CD14-positive monocyte (primary cell): ENCODE measurements at regions of chr6 and their contacts with region 1.

Region 1: GRCh38 chr6:157021344-157021992 is 244.3 kb downstream of the ARID1B start:
- DNase-seq: peak; percentile 64 to 76 (median 74)
- H3K4me3 ChIP-seq: peak overlapping the region; percentile 39 to 96 (median 88)
- H3K4me3 Mint-ChIP-seq: peak overlapping the region; percentile 93 to 95
- H3K27ac ChIP-seq: peak overlapping the region; percentile 93 to 98
- H3K27ac Mint-ChIP-seq: peak overlapping the region; percentile 95 to 99 (median 98)
- H3K4me1 ChIP-seq: peaks cover 24 to 34% of the 10 kb centered on the region in 2 donors
- H3K4me1 Mint-ChIP-seq: peaks cover 42% of the 10 kb centered on the region
- H3K27me3 ChIP-seq: no peaks in the 10 kb centered on the region
- H3K27me3 Mint-ChIP-seq: no peaks in the 10 kb centered on the region
- CTCF ChIP-seq: peak; percentile 51

Region 2: GRCh38 chr6:155314092-155314772 is 1707.2 kb before region 1 on chr6 and contains the start of gene TFB1M:
- intact Hi-C with region 1: loop called in 1 of 2 experiments (anchors 10 kb)
- DNase-seq: peak; percentile 95 to 97 (median 96)
- H3K4me3 ChIP-seq: peak within 1 kb of the TSS; percentile 89 to 90 (median 89)
- H3K4me3 Mint-ChIP-seq: peak within 1 kb of the TSS; percentile 93 to 98
- H3K27ac ChIP-seq: peak within 1 kb of the TSS; percentile 97 to 99
- H3K27ac Mint-ChIP-seq: peak within 1 kb of the TSS; percentile 94 to 98 (median 96)
- H3K4me1 ChIP-seq: peaks cover 18 to 27% of the 10 kb centered on the region in 2 donors
- H3K4me1 Mint-ChIP-seq: peaks cover 19% of the 10 kb centered on the region
- H3K27me3 ChIP-seq: no peaks in the 10 kb centered on the region
- H3K27me3 Mint-ChIP-seq: no peaks in the 10 kb centered on the region
- CTCF ChIP-seq: no peak
- polyA plus RNA-seq, gene TFB1M: 4.8 to 5.4 (median 4.8) TPM

Region 3: DNA sequence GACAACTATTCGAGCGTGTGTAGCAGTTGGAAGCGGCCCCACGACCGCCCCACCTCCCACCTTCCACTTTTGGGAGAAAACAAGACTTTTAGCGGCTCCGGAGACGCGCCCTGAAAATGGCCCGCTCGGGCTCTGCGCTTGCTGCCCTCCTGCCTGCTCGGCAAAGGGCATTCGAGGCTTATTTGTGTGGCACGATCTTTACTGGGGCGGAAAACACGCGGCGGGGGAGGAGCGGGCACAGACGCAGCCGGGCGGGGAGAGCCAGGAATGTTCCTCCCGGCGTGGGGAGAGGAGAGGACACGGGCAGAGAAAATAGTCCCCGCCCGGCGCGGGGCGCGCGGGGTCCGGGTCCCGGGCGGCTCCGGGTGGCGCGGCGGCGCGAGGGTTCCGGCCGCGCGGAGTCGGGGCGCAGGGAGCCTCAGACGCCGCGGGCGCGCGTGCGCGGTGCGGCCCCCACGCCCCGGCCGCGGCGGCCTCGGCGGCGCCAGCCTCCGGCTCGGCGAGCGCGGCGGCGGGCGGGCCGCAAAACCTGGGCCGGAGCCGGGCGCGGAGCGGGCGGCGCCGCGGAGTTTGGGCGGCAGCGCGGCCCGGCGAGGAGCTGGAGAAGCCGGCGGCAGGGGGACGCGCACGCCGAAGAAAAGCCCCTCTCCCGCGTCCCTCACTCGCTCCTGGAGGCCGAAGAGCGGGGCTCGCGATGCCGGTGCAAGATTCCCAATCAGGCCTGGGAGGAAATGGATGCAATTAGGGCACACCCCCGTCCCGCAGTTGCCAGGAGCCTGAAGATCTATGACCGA is 334.3 kb before region 1 on chr6:
- intact Hi-C with region 1: loop called in 1 of 2 experiments (anchors 5 kb)
- DNase-seq: peak; percentile 61 to 79 (median 73)
- H3K4me3 ChIP-seq: peak overlapping the region; percentile 68 to 86 (median 85)
- H3K4me3 Mint-ChIP-seq: peak overlapping the region; percentile 94 to 96
- H3K27ac ChIP-seq: peak overlapping the region; percentile 88 to 89
- H3K27ac Mint-ChIP-seq: peak overlapping the region; percentile 85 to 96 (median 94)
- H3K4me1 ChIP-seq: peaks cover 27 to 35% of the 10 kb centered on the region in 2 donors
- H3K4me1 Mint-ChIP-seq: peaks cover 32% of the 10 kb centered on the region
- H3K27me3 ChIP-seq: no peaks in the 10 kb centered on the region
- H3K27me3 Mint-ChIP-seq: peaks cover 2 to 7% (median 6%) of the 10 kb centered on the region in 3 donors
- CTCF ChIP-seq: no peak

Region 4: GRCh38 chr6:156776840-156777576 is 244.5 kb before region 1 on chr6 and contains the start of gene ARID1B:
- intact Hi-C with region 1: loop called in 1 of 2 experiments (anchors 5 kb)
- DNase-seq: peak; percentile 58 to 72 (median 71)
- H3K4me3 ChIP-seq: peak within 1 kb of the TSS; percentile 76 to 95 (median 90)
- H3K4me3 Mint-ChIP-seq: peak within 1 kb of the TSS; percentile 92 to 95
- H3K27ac ChIP-seq: peak within 1 kb of the TSS; percentile 83 to 87
- H3K27ac Mint-ChIP-seq: peak within 1 kb of the TSS; percentile 83 to 96 (median 96)
- H3K4me1 ChIP-seq: peaks cover 24 to 44% of the 10 kb centered on the region in 2 donors
- H3K4me1 Mint-ChIP-seq: peaks cover 39% of the 10 kb centered on the region
- H3K27me3 ChIP-seq: peaks cover 17 to 18% of the 10 kb centered on the region in 2 donors
- H3K27me3 Mint-ChIP-seq: peaks cover 20 to 26% (median 21%) of the 10 kb centered on the region in 3 donors
- CTCF ChIP-seq: no peak
- polyA plus RNA-seq, gene ARID1B: 3.2 to 22.1 (median 3.8) TPM

Region 5: GRCh38 chr6:156963712-156964700 is 57.5 kb before region 1 on chr6:
- intact Hi-C with region 1: loop called in 1 of 2 experiments (anchors 5 kb)
- DNase-seq: peak; percentile 76 to 92 (median 81)
- H3K4me3 ChIP-seq: peak overlapping the region; percentile 20 to 72 (median 63)
- H3K4me3 Mint-ChIP-seq: peak overlapping the region; percentile 78 to 88
- H3K27ac ChIP-seq: peak overlapping the region; percentile 81 to 83
- H3K27ac Mint-ChIP-seq: peak overlapping the region; percentile 88 to 96 (median 95)
- H3K4me1 ChIP-seq: peaks cover 7 to 18% of the 10 kb centered on the region in 2 donors
- H3K4me1 Mint-ChIP-seq: peaks cover 18% of the 10 kb centered on the region
- H3K27me3 ChIP-seq: no peaks in the 10 kb centered on the region
- H3K27me3 Mint-ChIP-seq: peaks cover 0 to 2% (median 0%) of the 10 kb centered on the region in 3 donors
- CTCF ChIP-seq: no peak